HepG2 (cell line): ENCODE measurements at regions of chr1 and their contacts with region 1.

Region 1: DNA sequence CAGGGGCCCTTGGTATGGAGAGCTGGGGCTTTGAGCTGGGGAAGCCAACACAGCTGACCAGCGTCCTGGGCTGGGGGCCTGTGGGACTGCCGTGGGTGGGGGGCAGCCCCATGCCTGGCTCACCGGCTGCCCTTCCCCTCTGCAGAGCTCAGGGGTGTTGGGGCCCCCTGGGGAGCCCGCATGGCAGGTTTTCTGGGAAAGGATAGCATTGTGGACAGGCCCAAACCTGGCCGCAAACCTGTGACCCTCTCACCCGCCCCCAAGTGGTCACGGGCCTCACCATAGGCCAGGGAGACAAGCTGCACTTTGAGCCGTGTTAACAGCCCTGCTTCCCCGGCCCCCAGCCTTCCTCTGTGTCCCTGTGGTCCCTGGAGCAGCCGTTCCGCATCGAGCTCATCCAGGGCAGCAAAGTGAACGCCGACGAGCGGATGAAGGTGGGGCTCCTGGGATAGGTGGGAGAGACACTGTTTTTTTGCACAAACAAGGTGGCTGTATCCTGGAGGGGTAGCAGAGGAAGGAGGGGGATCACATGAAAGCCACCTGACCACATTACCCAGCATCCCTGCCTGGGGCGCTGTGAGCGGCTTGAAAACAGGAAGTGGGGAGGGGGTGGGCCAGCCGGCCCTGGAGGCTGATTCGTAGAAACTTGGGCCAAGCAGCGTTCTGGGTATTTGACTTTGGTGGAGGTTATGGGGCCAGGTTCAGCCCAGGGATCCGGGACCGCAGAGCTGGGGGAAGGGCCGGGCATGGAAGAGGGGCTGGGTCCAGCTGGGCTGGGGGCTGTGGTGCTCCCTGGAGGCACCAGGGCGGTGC is 65.9 kb downstream of the PIK3CD start:
- DNase-seq: peak; percentile 93
- ATAC-seq: peak; percentile 89
- H3K4me3 ChIP-seq: peak overlapping the region; percentile 56 to 83 (median 65)
- H3K27ac ChIP-seq: peak overlapping the region; percentile 97
- H3K4me1 ChIP-seq: peaks cover 42% of the 10 kb centered on the region
- H3K27me3 ChIP-seq: no peaks in the 10 kb centered on the region
- CTCF ChIP-seq: peak; percentile 68
- EP300 ChIP-seq: peak in 1 of 2 experiments; percentile 52; a peak in 2 of 4 replicates
- POLR2A ChIP-seq: peak in 1 of 2 experiments; percentile 74; a peak in 2 of 4 replicates
- RAD21 ChIP-seq: peak; percentile 65

Region 2: GRCh38 chr1:9689011-9689706 is 28.2 kb before region 1 on chr1:
- CTCF ChIA-PET with region 1: no interaction called
- POLR2A ChIA-PET with region 1: interaction called, 35 read pairs
- in situ Hi-C with region 1: no loop called
- intact Hi-C with region 1: no loop called
- DNase-seq: peak; percentile 48
- ATAC-seq: peak; percentile 68
- H3K4me3 ChIP-seq: peak overlapping the region; percentile 64 to 72 (median 70)
- H3K27ac ChIP-seq: no peak overlapping the region
- H3K4me1 ChIP-seq: peaks cover 39% of the 10 kb centered on the region
- H3K27me3 ChIP-seq: peaks cover 0 to 18% of the 10 kb centered on the region in 2 experiments; a peak in 1 of 5 replicates
- CTCF ChIP-seq: no peak
- EP300 ChIP-seq: no peak
- POLR2A ChIP-seq: peak in 1 of 2 experiments; percentile 31; a peak in 1 of 4 replicates
- RAD21 ChIP-seq: no peak